Dorsolateral prefrontal cortex (tissue), 120 donors: ENCODE measurements at regions of chr17 and their contacts with region 1.

Region 1: DNA sequence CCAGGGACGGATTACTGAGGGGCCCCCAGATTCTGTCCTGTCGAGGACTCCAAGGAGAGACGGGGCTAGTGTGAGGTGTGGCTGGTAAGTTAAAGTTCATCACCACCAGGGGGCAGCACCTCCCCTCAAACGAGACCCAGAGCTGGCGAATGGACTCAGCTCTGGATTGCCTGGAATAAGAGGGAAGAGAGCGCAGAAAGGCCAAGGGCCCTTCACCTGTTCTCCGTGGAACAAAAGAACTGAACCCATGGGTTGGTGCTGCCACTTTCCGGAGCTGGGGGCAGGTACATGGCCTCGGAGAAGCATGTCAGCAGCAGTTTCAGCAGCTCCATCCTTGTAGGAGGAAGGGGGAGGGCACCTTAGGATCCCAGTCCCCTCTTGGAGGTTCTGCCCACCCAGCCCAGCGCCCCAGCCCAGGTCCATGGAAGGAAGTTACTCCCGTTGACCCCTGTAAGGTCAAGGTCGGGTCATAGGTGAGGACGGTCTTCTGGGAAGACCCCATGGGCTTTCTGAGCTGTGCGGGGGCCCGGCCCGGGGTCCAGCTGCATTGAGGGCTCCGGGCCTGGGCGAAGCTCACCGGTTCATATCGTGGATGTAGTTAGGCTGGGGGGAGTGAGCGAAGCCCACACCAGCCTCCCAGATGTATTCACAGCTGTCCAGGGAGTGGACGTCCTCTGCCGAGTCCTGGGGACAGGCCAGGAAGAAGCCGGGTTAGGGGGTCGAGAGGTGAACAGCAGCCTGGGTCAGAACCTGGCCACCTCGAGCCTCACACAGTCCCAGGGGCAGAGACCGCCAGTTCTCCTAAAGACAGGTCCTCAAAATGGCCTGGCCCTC is 10.7 kb downstream of the HID1 start:
- DNase-seq: peak; percentile 82 to 94 (median 90)
- H3K4me3 ChIP-seq: peak overlapping the region in 10 of 59 donors; percentile 0 to 17 (median 12)
- H3K27ac ChIP-seq: peak overlapping the region; percentile 65 to 99 (median 94)
- H3K27me3 ChIP-seq: no peaks in the 10 kb centered on the region
- CTCF ChIP-seq: peak; percentile 63 to 96 (median 89)

Region 2: DNA sequence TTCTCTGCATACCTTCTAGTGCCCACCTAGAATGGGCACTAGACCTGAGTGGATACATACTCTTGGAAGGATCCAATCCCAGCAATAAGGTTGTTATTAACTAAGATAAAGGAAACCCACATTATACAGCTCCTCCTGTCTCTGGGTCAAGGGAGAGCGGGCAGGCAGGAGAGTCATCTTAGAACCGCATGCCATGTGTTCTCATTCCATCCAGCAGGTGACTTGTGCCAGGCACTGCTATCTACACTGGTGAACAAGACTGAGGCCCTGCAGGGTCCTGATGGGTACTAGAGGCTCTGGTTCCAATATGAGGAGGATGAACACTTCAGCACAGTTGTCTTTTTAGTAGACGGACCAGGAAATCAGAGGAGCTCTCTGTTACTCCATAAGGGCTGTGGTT is 388.7 kb before region 1 on chr17:
- intact Hi-C with region 1: no loop called
- DNase-seq: no peak
- H3K4me3 ChIP-seq: no peak overlapping the region
- H3K27ac ChIP-seq: no peak overlapping the region
- H3K27me3 ChIP-seq: peaks cover 0 to 9% (median 0%) of the 10 kb centered on the region in 45 donors
- CTCF ChIP-seq: no peak

Region 3: GRCh38 chr17:74798239-74798707 is 163.6 kb before region 1 on chr17:
- intact Hi-C with region 1: loop called in 1 of 2 experiments (anchors 10 kb)
- DNase-seq: no peak
- H3K4me3 ChIP-seq: no peak overlapping the region
- H3K27ac ChIP-seq: peak overlapping the region in 1 of 59 donors; percentile 96
- H3K27me3 ChIP-seq: no peaks in the 10 kb centered on the region
- CTCF ChIP-seq: no peak

Region 4: GRCh38 chr17:74987418-74987908 is 25.6 kb after region 1 on chr17 and contains the start of gene CDR2L:
- intact Hi-C with region 1: loop called in 1 of 2 experiments (anchors 2 kb)
- DNase-seq: peak; percentile 98 to 99 (median 99)
- H3K4me3 ChIP-seq: peak within 1 kb of the TSS; percentile 19 to 97 (median 83)
- H3K27ac ChIP-seq: peak within 1 kb of the TSS; percentile 29 to 98 (median 90)
- H3K27me3 ChIP-seq: no peaks in the 10 kb centered on the region
- CTCF ChIP-seq: peak in 16 of 56 donors; percentile 1 to 48 (median 14)
- total RNA-seq, gene CDR2L: 11.9 to 63.9 (median 22.6) TPM

Region 5: DNA sequence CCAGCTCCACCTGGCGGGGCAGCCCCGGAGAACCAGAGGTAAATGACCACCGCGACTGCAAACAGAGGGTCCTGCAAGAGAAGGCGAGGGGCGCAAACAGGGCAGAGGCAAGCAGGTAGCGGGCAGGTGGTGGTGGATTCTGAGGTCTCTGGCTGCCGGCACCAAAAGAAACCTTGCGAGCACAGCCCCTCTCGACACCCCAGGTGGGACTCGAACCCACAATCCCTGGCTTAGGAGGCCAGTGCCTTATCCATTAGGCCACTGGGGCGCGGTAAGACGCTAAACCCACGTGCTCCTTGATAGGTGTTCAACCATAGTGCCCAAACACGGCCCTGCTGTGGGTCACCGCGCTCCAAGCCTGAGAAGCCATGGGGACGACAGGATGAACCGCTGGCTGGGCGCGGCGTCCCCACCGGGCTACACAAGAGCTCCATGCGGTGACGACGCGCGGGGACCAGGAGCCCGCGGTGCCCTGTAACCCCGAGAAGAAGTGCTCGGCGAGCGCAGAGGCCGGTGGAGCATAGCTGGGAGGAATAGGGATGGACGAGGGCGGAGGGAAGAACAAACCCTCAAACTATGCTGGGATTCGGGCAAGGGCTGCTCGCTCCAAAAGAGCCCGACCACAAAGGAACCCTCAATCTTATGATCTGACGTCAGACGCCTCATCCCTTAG is 72.5 kb after region 1 on chr17:
- intact Hi-C with region 1: loop called (anchors 5 kb)
- DNase-seq: peak; percentile 78 to 94 (median 87)
- H3K4me3 ChIP-seq: peak overlapping the region; percentile 44 to 97 (median 80)
- H3K27ac ChIP-seq: peak overlapping the region; percentile 60 to 99 (median 97)
- H3K27me3 ChIP-seq: no peaks in the 10 kb centered on the region
- CTCF ChIP-seq: peak in 1 of 56 donors; percentile 11

Region 6: DNA sequence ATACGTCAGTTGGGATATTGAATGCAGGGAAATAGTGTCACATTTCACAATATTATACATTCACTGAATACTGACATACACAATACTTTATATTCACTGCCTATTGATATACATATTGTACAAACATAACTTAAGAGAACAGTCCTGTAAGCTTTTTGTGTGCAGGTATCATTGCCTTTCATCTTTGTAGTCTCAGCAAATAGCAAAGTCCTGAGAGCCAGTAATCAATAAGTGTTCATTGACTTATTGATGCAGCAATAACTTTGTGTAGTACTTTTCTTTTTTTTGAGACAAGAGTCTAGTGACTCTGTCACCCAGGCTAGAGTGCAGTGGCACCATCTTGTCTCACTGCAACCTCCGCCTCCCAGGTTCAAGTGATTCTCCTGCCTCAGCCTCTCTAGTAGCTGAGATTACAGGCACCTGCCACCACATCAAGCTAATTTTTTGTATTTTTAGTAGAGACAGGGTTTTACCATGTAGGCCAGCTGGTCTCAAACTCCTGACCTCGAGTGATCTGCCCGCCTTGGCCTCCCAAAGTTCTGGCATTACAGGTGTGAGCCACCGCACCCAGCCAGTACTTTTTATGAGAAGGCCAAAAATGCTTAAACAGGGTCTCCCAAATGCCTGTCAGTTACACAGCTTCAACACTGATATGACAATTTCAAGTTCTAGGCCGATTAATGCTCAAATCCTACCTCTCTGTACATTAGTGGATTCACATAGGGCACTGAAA is 238.2 kb after region 1 on chr17:
- intact Hi-C with region 1: loop called in 1 of 2 experiments (anchors 5 kb)
- DNase-seq: no peak
- H3K4me3 ChIP-seq: no peak overlapping the region
- H3K27ac ChIP-seq: no peak overlapping the region
- H3K27me3 ChIP-seq: no peaks in the 10 kb centered on the region
- CTCF ChIP-seq: no peak

Region 7: DNA sequence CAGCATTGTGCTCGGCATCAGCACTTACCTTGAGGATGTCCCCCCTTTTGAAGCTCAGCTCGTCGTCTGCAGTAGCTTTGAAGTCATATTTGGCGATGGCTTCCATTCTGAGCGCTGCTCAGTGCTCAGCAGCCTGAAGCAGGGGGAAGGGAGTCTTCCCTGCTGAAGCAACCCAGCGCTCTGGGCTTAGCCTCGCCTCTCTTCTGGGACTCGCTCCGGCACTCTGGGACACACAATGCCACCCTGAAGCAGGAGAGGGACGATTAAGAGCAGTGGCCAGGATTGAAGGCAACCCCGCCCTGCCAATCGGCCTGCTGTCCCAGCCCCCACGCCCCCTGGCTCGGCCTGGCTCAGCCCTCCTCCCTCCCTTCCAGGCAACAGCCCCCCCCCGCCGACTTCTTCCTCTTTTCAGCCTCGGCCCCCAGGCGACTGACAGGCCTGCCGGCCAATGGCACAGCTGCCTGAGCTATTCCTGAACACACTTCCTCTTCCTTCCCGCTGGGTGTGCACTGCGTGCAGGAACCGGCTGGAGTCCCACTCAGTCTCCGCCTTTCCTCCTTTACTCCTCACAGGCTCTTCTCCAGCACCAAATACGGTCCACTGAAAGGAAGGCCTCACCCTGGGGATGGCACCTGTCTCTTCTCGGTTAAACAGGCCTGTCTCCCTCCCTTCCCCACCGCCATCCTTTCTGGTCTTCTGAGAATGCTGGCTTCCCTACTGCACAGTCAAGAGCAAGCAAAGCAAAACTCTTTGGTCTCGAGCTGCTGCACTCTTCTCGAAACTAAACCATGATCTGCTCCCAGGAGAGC is 431.9 kb after region 1 on chr17:
- intact Hi-C with region 1: no loop called
- DNase-seq: peak; percentile 98 to 99 (median 99)
- H3K4me3 ChIP-seq: peak overlapping the region; percentile 54 to 99 (median 77)
- H3K27ac ChIP-seq: peak overlapping the region; percentile 55 to 97 (median 91)
- H3K27me3 ChIP-seq: no peaks in the 10 kb centered on the region
- CTCF ChIP-seq: peak in 37 of 56 donors; percentile 4 to 52 (median 24)